CD8-positive, alpha-beta T cell (primary cell): ENCODE measurements at regions of chr22 and their contacts with region 1.

Region 1: GRCh38 chr22:20606041-20606783 is 98.8 kb downstream of the MED15 start:
- DNase-seq: peak; percentile 38 to 85 (median 72)
- ATAC-seq: peak; percentile 96
- H3K4me3 ChIP-seq: no peak overlapping the region
- H3K4me3 Mint-ChIP-seq: no peak overlapping the region
- H3K27ac ChIP-seq: no peak overlapping the region
- H3K27ac Mint-ChIP-seq: no peak overlapping the region
- H3K4me1 ChIP-seq: peaks cover 7% of the 10 kb centered on the region
- H3K4me1 Mint-ChIP-seq: peaks cover 14% of the 10 kb centered on the region
- H3K27me3 ChIP-seq: no peaks in the 10 kb centered on the region
- H3K27me3 Mint-ChIP-seq: no peaks in the 10 kb centered on the region
- CTCF ChIP-seq: peak; percentile 71

Region 2: DNA sequence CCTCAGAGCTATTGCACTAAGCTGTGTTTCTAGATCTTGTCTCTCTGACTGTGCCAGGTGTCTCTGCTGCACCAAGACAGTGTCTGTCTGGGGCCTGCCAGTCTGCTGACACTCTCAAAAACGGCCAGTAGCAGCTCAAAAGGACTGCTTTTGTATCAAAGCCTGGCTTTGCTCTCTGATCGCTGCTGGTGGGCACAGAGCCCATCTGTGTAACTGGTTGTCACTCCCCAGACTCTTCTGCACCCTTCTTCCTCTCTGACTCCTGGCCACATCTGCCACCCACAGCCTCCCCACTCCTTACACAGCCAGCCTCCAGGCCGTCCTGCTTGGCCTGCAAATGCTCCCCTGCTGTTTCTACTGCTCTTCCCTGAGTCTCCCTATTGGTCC is 72.3 kb before region 1 on chr22:
- CTCF ChIA-PET with region 1: no interaction called
- POLR2A ChIA-PET with region 1: no interaction called
- intact Hi-C with region 1: no loop called
- DNase-seq: peak in 1 of 9 experiments; percentile 19
- ATAC-seq: peak; percentile 27
- H3K4me3 ChIP-seq: no peak overlapping the region
- H3K4me3 Mint-ChIP-seq: peak overlapping the region; percentile 26
- H3K27ac ChIP-seq: peak overlapping the region in 1 of 2 experiments; percentile 50
- H3K27ac Mint-ChIP-seq: peak overlapping the region; percentile 90
- H3K4me1 ChIP-seq: peaks cover 50% of the 10 kb centered on the region
- H3K4me1 Mint-ChIP-seq: peaks cover 70% of the 10 kb centered on the region
- H3K27me3 ChIP-seq: no peaks in the 10 kb centered on the region
- H3K27me3 Mint-ChIP-seq: no peaks in the 10 kb centered on the region
- CTCF ChIP-seq: no peak

Region 3: DNA sequence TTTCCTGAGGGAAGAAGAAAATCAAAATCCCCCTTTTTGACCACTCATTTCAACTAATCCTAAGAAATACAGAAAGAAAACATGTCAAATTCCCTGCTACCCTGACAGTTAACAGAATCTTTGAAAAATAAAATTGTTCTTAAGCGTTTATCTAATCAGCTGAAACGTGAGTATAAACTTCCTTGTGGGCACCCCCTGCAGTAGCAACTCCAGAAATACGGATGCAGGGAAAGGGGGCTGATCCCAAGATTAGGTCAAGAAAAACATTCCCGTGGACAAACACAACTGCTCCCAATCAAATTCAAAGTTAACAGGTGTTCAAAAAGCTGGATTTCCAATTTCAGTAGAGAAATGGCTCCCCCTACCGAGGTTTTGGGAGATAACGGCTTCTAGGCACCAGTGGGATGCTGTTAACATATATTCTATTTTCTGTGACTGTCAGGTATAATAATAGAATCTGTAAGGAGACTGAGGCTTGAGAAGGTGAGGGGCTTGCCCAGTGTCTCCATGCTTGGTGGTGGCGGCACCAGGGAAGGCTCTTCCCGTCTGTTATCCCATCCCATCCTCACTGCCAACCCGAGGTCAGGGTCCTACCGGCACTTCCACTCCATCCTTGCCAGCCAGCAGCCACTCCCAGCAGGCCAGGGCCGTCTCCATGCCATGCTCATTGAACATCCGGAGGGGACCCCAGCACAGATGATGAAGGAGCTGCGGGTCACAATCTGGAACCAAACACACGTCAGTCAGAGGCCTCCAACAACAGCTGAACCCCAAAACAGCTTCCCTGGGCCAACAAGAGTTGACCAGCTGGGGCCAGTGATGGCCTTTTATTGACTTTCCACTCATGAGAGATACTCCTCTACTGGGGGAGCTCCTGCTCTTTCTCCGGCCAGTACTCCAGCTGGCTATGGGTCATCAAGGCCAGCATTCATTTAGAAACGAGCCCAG is 135.7 kb after region 1 on chr22:
- CTCF ChIA-PET with region 1: interaction called, 7 read pairs
- POLR2A ChIA-PET with region 1: no interaction called
- intact Hi-C with region 1: loop called (anchors 1 kb)
- DNase-seq: peak in 7 of 9 experiments; percentile 15 to 60 (median 50)
- ATAC-seq: no peak
- H3K4me3 ChIP-seq: no peak overlapping the region
- H3K4me3 Mint-ChIP-seq: no peak overlapping the region
- H3K27ac ChIP-seq: no peak overlapping the region
- H3K27ac Mint-ChIP-seq: no peak overlapping the region
- H3K4me1 ChIP-seq: no peaks in the 10 kb centered on the region
- H3K4me1 Mint-ChIP-seq: no peaks in the 10 kb centered on the region
- H3K27me3 ChIP-seq: no peaks in the 10 kb centered on the region
- H3K27me3 Mint-ChIP-seq: no peaks in the 10 kb centered on the region
- CTCF ChIP-seq: peak; percentile 75